Caco-2 (cell line): ENCODE measurements at regions of chr2 and their contacts with region 1.

Region 1: GRCh38 chr2:25700221-25700660 is 26.9 kb upstream of the DTNB start:
- DNase-seq: peak; percentile 56 to 64
- H3K4me3 ChIP-seq: no peak overlapping the region
- H3K4me3 Mint-ChIP-seq: no peak overlapping the region
- H3K27ac Mint-ChIP-seq: no peak overlapping the region
- H3K4me1 ChIP-seq: no peaks in the 10 kb centered on the region
- H3K4me1 Mint-ChIP-seq: no peaks in the 10 kb centered on the region
- H3K27me3 ChIP-seq: no peaks in the 10 kb centered on the region
- H3K27me3 Mint-ChIP-seq: no peaks in the 10 kb centered on the region
- CTCF ChIP-seq: peak; percentile 71 to 82

Region 2: GRCh38 chr2:25664183-25664964 is 35.9 kb before region 1 on chr2:
- CTCF ChIA-PET with region 1: interaction called, 10 read pairs
- POLR2A ChIA-PET with region 1: no interaction called
- intact Hi-C with region 1: loop called (anchors 5 kb)
- DNase-seq: peak; percentile 74 to 83
- H3K4me3 ChIP-seq: no peak overlapping the region
- H3K4me3 Mint-ChIP-seq: no peak overlapping the region
- H3K27ac Mint-ChIP-seq: peak overlapping the region; percentile 21
- H3K4me1 ChIP-seq: peaks cover 12% of the 10 kb centered on the region; the same call in 1 of the 2 replicates
- H3K4me1 Mint-ChIP-seq: peaks cover 39% of the 10 kb centered on the region
- H3K27me3 ChIP-seq: no peaks in the 10 kb centered on the region
- H3K27me3 Mint-ChIP-seq: no peaks in the 10 kb centered on the region
- CTCF ChIP-seq: peak; percentile 81 to 88

Region 3: DNA sequence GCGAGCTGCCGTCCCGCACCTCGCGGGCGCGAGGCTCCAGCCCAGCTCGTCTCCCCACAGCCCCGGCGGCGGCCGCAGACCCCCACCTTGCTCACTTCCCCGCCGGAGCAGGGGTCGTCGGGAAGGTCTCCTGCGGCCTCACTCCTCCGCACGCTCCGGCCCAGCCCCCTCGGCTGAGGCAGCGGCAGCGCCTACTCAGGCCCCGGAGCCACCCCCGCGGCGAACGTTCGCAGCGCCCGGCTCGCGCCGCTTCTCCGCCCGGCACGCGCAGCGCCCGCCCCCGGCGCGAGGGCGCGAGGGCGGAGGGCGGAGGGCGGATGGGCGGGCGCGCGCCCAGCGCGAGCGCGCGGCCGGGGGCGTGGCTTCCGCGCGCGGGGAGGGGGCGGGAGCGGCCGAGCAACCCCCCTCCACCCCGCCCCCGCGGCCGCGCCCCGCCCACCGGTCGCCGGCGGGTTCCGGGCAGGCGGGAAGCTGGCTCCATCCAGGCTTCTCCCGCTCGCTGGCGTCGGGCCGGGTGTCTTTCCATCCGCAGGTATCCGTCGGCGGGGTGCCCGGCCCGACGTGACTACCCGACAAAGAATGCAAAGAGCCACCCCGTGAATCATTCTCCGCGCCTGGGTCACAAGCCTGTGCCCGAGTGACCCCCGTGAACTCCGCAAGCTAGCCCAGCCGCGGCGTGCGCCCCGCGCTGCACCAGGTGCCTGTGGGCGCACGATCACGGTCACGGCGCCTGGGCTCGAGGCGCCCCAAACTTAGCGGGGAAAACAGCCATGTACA is 26.8 kb before region 1 on chr2 and contains the start of gene DTNB:
- CTCF ChIA-PET with region 1: interaction called, 7 read pairs
- POLR2A ChIA-PET with region 1: no interaction called
- intact Hi-C with region 1: loop called (anchors 2 kb)
- DNase-seq: peak; percentile 75 to 88
- H3K4me3 ChIP-seq: peak within 1 kb of the TSS; percentile 95
- H3K4me3 Mint-ChIP-seq: peak within 1 kb of the TSS; percentile 75
- H3K27ac Mint-ChIP-seq: peak within 1 kb of the TSS; percentile 22
- H3K4me1 ChIP-seq: 0 out of 2 replicates have a peak, but pooled peaks cover 4% of the 10 kb centered on the region
- H3K4me1 Mint-ChIP-seq: peaks cover 6% of the 10 kb centered on the region
- H3K27me3 ChIP-seq: no peaks in the 10 kb centered on the region
- H3K27me3 Mint-ChIP-seq: no peaks in the 10 kb centered on the region
- CTCF ChIP-seq: no peak
- total RNA-seq, gene DTNB: 47.2 and 50.4 TPM in 2 replicates